Ascending aorta (tissue), 2 donors: ENCODE measurements at regions of chrX and their contacts with region 1.

Region 1: GRCh38 chrX:56232221-56233082 is at the start of gene KLF8:
- DNase-seq: peak in 1 of 2 donors; percentile 67
- H3K4me3 ChIP-seq: peak within 1 kb of the TSS; percentile 61 to 74
- H3K27ac ChIP-seq: peak within 1 kb of the TSS; percentile 76 to 82
- H3K4me1 ChIP-seq: no peaks in the 10 kb centered on the region
- H3K27me3 ChIP-seq: no peaks in the 10 kb centered on the region
- CTCF ChIP-seq: no peak
- total RNA-seq, gene KLF8: 5.7 TPM

Region 2: GRCh38 chrX:55717521-55718497 is 514.6 kb before region 1 on chrX and contains the start of gene RRAGB:
- intact Hi-C with region 1: loop called (anchors 10 kb)
- DNase-seq: peak; percentile 93 to 96
- H3K4me3 ChIP-seq: peak within 1 kb of the TSS; percentile 59 to 81
- H3K27ac ChIP-seq: peak within 1 kb of the TSS; percentile 73 to 85
- H3K4me1 ChIP-seq: peaks cover 0 to 4% of the 10 kb centered on the region in 2 donors
- H3K27me3 ChIP-seq: no peaks in the 10 kb centered on the region
- CTCF ChIP-seq: peak; percentile 4 to 60 (median 49)
- total RNA-seq, gene RRAGB: 9.9 TPM

Region 3: GRCh38 chrX:55907968-55908607 is 324.4 kb before region 1 on chrX:
- intact Hi-C with region 1: loop called (anchors 5 kb)
- DNase-seq: peak in 1 of 2 donors; percentile 72
- H3K4me3 ChIP-seq: peak overlapping the region; percentile 62 to 72
- H3K27ac ChIP-seq: peak overlapping the region; percentile 67 to 74
- H3K4me1 ChIP-seq: no peaks in the 10 kb centered on the region
- H3K27me3 ChIP-seq: no peaks in the 10 kb centered on the region
- CTCF ChIP-seq: peak in 2 of 3 experiments; percentile 23 to 48

Region 4: DNA sequence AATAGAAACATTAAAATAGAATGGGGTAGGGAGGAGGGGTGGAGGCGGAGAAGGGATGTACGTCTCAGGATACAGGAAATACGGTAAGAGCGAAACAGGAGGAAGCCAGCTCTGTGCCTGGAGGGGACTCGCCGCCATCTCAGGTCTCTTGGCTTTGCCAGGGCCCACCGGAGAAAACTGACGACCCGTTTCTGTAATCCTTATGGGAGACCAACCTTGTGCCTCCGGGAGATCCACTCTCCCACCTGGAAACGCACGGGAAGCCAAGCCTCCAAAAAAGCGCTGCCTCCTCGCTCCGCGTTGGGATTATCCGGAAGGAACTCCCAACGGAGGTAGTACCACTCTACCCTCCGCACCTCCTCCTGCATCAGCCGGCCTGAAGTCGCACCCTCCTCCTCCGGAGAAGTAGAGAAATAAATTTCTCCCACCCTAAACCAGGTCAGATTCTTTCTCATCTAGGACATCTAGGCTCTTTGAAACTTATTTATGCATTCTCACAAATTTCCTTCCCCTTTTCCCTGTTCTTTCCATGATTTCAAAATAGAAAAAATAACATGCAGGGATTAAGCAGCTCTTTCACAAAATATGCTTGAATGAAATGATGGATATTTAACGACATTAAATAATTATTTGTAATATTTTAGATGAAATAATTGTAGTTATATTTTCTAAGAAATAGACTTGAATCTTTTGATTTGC is 496.8 kb after region 1 on chrX and contains the start of gene NBDY:
- intact Hi-C with region 1: loop called (anchors 5 kb)
- DNase-seq: peak in 1 of 2 donors; percentile 64
- H3K4me3 ChIP-seq: peak within 1 kb of the TSS; percentile 58 to 66
- H3K27ac ChIP-seq: peak within 1 kb of the TSS; percentile 75 to 76
- H3K4me1 ChIP-seq: no peaks in the 10 kb centered on the region
- H3K27me3 ChIP-seq: no peaks in the 10 kb centered on the region
- CTCF ChIP-seq: no peak
- total RNA-seq, gene NBDY: 15.4 TPM

Region 5: GRCh38 chrX:57900975-57901374 is 1668.5 kb after region 1 on chrX:
- intact Hi-C with region 1: loop called (anchors 10 kb)
- DNase-seq: no peak
- H3K4me3 ChIP-seq: peak overlapping the region in 1 of 2 donors; percentile 26
- H3K27ac ChIP-seq: peak overlapping the region in 1 of 2 donors; percentile 10
- H3K4me1 ChIP-seq: no peaks in the 10 kb centered on the region
- H3K27me3 ChIP-seq: no peaks in the 10 kb centered on the region
- CTCF ChIP-seq: no peak